ENCODE measurements at regions of chr16 and their contacts with region 1.

Region 1: GRCh38 chr16:23556881-23557778 is at the starts of genes EARS2 and UBFD1:
- DNase-seq: peak; percentile 93 to 97 (median 96)
- H3K4me3 ChIP-seq: peak within 1 kb of the TSS; percentile 65 to 99 (median 90)
- H3K27ac ChIP-seq: peak within 1 kb of the TSS; percentile 70 to 97 (median 90)
- H3K27me3 ChIP-seq: no peaks in the 10 kb centered on the region
- CTCF ChIP-seq: peak; percentile 73 to 97 (median 90)
- total RNA-seq, gene EARS2: 20.1 to 47.2 (median 31.9) TPM
- total RNA-seq, gene UBFD1: 43.7 to 103 (median 69.8) TPM

Region 2: GRCh38 chr16:23182460-23183309 is 374.4 kb before region 1 on chr16 and contains the start of gene SCNN1G:
- intact Hi-C with region 1: loop called in 1 of 2 experiments (anchors 5 kb)
- DNase-seq: peak; percentile 45 to 82 (median 60)
- H3K4me3 ChIP-seq: peak within 1 kb of the TSS; percentile 34 to 77 (median 60)
- H3K27ac ChIP-seq: peak within 1 kb of the TSS in 2 of 59 donors; percentile 28 to 78
- H3K27me3 ChIP-seq: peaks cover 0 to 43% (median 13%) of the 10 kb centered on the region in 45 donors
- CTCF ChIP-seq: peak; percentile 63 to 99 (median 88)
- total RNA-seq, gene SCNN1G: 0.13 to 1.1 (median 0.31) TPM in 107 of 120 experiments, not detected in the others

Region 3: GRCh38 chr16:23408823-23409298 is 148.3 kb before region 1 on chr16:
- intact Hi-C with region 1: no loop called
- DNase-seq: peak in 8 of 10 donors; percentile 41 to 86 (median 61)
- H3K4me3 ChIP-seq: peak overlapping the region in 3 of 59 donors; percentile 7 to 23 (median 17)
- H3K27ac ChIP-seq: peak overlapping the region in 40 of 59 donors; percentile 3 to 93 (median 52)
- H3K27me3 ChIP-seq: no peaks in the 10 kb centered on the region
- CTCF ChIP-seq: no peak

Region 4: GRCh38 chr16:23466066-23466885 is 90.9 kb before region 1 on chr16:
- intact Hi-C with region 1: loop called in 1 of 2 experiments (anchors 10 kb)
- DNase-seq: no peak
- H3K4me3 ChIP-seq: no peak overlapping the region
- H3K27ac ChIP-seq: no peak overlapping the region
- H3K27me3 ChIP-seq: peaks cover 0 to 3% (median 0%) of the 10 kb centered on the region in 45 donors
- CTCF ChIP-seq: no peak

Region 5: GRCh38 chr16:23595951-23596720 is 39.0 kb after region 1 on chr16 and contains the start of gene NDUFAB1:
- intact Hi-C with region 1: loop called (anchors 1 kb)
- DNase-seq: peak; percentile 79 to 93 (median 90)
- H3K4me3 ChIP-seq: peak within 1 kb of the TSS; percentile 75 to 100 (median 96)
- H3K27ac ChIP-seq: peak within 1 kb of the TSS in 55 of 59 donors; percentile 1 to 92 (median 75)
- H3K27me3 ChIP-seq: no peaks in the 10 kb centered on the region
- CTCF ChIP-seq: peak; percentile 98 to 100 (median 100)
- total RNA-seq, gene NDUFAB1: 48.6 to 136 (median 98.9) TPM

Region 6: GRCh38 chr16:25111403-25112166 is 1554.5 kb after region 1 on chr16 and contains the start of gene LCMT1:
- intact Hi-C with region 1: loop called in 1 of 2 experiments (anchors 5 kb)
- DNase-seq: peak; percentile 73 to 94 (median 91)
- H3K4me3 ChIP-seq: peak within 1 kb of the TSS; percentile 68 to 100 (median 96)
- H3K27ac ChIP-seq: peak within 1 kb of the TSS in 56 of 59 donors; percentile 2 to 91 (median 78)
- H3K27me3 ChIP-seq: no peaks in the 10 kb centered on the region
- CTCF ChIP-seq: peak in 29 of 56 donors; percentile 4 to 46 (median 26)
- total RNA-seq, gene LCMT1: 37.1 to 97.2 (median 71.6) TPM